ENCODE measurements at regions of chr3 and their contacts with region 1.

Region 1: GRCh38 chr3:46488735-46489361 is 8.9 kb upstream of the RTP3 start:
- DNase-seq: peak; percentile 96
- H3K4me3 ChIP-seq: no peak overlapping the region
- H3K27ac ChIP-seq: peak overlapping the region; percentile 39
- H3K4me1 ChIP-seq: peaks cover 46% of the 10 kb centered on the region
- CTCF ChIP-seq: peak; percentile 100

Region 2: GRCh38 chr3:46503200-46503874 is 14.5 kb after region 1 on chr3:
- CTCF ChIA-PET with region 1: no interaction called
- POLR2A ChIA-PET with region 1: interaction called, 13 read pairs
- intact Hi-C with region 1: no loop called
- DNase-seq: peak; percentile 26
- H3K4me3 ChIP-seq: no peak overlapping the region
- H3K27ac ChIP-seq: no peak overlapping the region
- H3K4me1 ChIP-seq: peaks cover 56% of the 10 kb centered on the region
- CTCF ChIP-seq: no peak

Region 3: GRCh38 chr3:46538803-46539442 is 50.1 kb after region 1 on chr3:
- CTCF ChIA-PET with region 1: interaction called, 26 read pairs
- POLR2A ChIA-PET with region 1: interaction called, 21 read pairs
- intact Hi-C with region 1: loop called (anchors 1 kb)
- DNase-seq: peak; percentile 99
- H3K4me3 ChIP-seq: peak overlapping the region; percentile 56
- H3K27ac ChIP-seq: peak overlapping the region; percentile 99
- H3K4me1 ChIP-seq: peaks cover 79% of the 10 kb centered on the region
- CTCF ChIP-seq: no peak

Region 4: GRCh38 chr3:46549408-46549904 is 60.6 kb after region 1 on chr3:
- CTCF ChIA-PET with region 1: interaction called, 12 read pairs
- POLR2A ChIA-PET with region 1: interaction called, 16 read pairs
- intact Hi-C with region 1: no loop called
- DNase-seq: peak; percentile 97
- H3K4me3 ChIP-seq: peak overlapping the region; percentile 35
- H3K27ac ChIP-seq: peak overlapping the region; percentile 98
- H3K4me1 ChIP-seq: peaks cover 95% of the 10 kb centered on the region
- CTCF ChIP-seq: no peak

Region 5: DNA sequence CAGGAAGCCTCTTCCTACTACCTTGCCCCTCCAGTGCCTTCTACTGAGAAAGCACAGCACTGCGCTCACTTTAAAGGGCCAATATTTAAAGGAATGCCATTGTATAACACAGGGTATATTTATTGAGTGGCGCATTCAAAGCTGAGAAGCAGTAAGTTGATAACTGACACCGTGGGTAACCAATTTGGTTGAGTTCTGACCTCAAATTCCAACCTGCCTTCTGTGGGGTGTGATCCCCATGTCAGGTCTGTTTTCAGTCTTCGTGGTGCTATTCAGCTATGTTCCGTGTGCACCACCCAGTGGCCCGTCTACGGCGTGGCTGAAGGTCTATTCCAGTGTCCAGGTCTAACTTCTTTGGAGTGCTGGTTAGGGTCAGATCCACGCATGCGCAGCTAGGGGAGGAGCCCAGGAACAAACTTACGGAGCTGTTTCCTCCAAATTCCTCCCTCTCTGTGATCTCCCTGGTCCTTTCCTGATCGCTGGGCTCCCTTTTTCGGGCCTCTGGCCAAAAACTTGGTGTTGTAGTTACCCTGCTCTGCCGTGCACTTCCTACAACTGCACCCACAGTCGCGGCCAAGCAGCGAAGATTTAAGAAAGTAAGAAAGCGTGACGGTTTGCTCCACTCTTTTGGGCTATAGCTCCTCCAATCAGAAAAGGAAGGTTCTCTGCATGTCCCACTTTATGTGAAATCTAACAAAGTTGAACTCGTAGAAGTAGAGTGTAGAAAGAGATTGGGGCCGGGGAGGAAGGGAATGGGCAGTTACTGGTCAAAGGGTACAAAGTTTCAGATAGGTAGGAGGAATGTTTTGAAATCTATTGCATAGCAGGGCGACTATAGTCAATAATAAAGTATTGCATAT is 69.6 kb after region 1 on chr3:
- CTCF ChIA-PET with region 1: interaction called, 36 read pairs
- POLR2A ChIA-PET with region 1: interaction called, 14 read pairs
- intact Hi-C with region 1: loop called (anchors 1 kb)
- DNase-seq: peak; percentile 88
- H3K4me3 ChIP-seq: no peak overlapping the region
- H3K27ac ChIP-seq: peak overlapping the region; percentile 32
- H3K4me1 ChIP-seq: peaks cover 23% of the 10 kb centered on the region
- CTCF ChIP-seq: peak; percentile 98

Region 6: GRCh38 chr3:46629551-46630517 is 141.0 kb after region 1 on chr3:
- CTCF ChIA-PET with region 1: interaction called, 13 read pairs
- POLR2A ChIA-PET with region 1: interaction called, 4 read pairs
- intact Hi-C with region 1: loop called (anchors 1 kb)
- DNase-seq: peak; percentile 65
- H3K4me3 ChIP-seq: no peak overlapping the region
- H3K27ac ChIP-seq: no peak overlapping the region
- H3K4me1 ChIP-seq: peaks cover 12% of the 10 kb centered on the region
- CTCF ChIP-seq: peak; percentile 85

Region 7: DNA sequence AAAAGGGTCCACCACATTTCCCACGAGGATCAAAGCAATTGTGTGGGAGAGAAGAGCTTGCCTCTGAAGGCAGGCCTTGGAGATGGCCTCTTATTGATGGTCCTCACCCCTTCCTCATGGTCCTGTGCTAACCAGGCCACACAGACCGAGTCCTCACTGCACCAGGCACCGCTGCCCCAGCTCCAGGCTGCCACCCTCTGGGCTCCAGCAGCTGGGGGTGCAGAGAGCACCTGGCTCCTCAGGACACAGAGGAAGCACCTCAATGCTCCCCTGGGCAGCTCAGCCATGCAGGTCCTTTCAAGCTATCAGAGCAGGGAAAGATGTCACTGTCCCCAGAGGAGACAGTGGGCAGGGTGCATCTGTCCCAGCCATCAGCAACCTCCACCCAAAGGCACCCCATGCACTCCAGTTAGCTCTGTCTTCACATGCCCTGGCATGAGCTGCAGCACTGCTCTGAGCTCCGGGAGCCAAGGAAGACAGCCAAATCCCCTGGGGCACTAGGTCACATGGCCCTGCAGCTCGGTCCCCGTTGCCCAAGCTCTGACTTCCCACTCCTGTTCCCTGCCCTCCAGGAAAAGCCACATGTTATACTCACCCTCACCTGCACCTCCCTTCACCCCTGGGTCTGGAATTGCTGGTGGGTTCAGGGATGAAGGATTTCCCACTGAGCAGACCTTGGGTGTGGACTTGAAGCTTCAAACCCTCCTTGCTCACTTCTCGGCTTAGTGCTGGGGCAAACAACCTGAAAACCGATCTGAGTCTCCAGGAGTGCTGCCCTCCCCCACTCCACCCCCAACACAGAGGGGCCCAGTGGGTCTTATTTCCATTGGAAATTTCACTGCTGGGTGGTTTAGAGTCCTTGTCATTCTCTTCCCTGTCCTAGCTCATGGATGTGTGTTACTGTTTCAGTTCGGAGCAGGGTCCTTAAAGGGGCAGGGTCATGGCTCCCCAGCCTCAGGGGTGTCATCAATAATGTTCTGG is 172.0 kb after region 1 on chr3:
- CTCF ChIA-PET with region 1: interaction called, 3 read pairs
- POLR2A ChIA-PET with region 1: no interaction called
- intact Hi-C with region 1: loop called (anchors 2 kb)
- DNase-seq: peak; percentile 49
- H3K4me3 ChIP-seq: no peak overlapping the region
- H3K27ac ChIP-seq: no peak overlapping the region
- H3K4me1 ChIP-seq: peaks cover 5% of the 10 kb centered on the region
- CTCF ChIP-seq: peak; percentile 35

Region 8: GRCh38 chr3:46845791-46846623 is 357.2 kb after region 1 on chr3:
- CTCF ChIA-PET with region 1: no interaction called
- POLR2A ChIA-PET with region 1: no interaction called
- intact Hi-C with region 1: no loop called
- DNase-seq: peak; percentile 14
- H3K4me3 ChIP-seq: no peak overlapping the region
- H3K27ac ChIP-seq: no peak overlapping the region
- H3K4me1 ChIP-seq: no peaks in the 10 kb centered on the region
- CTCF ChIP-seq: peak; percentile 52